PC-3 (cell line): ENCODE measurements at regions of chr21 and their contacts with region 1.

Region 1: GRCh38 chr21:45643021-45643980 is at the start of gene PCBP3:
- DNase-seq: peak; percentile 96
- ATAC-seq: peak; percentile 80
- H3K4me3 ChIP-seq: peak within 1 kb of the TSS; percentile 66
- H3K27ac ChIP-seq: no peak within 1 kb of the TSS
- H3K4me1 ChIP-seq: peaks cover 9% of the 10 kb centered on the region
- H3K27me3 ChIP-seq: no peaks in the 10 kb centered on the region
- CTCF ChIP-seq: no peak
- total RNA-seq, gene PCBP3: 2.4 and 3.0 TPM in 2 replicates

Region 2: GRCh38 chr21:45726438-45726837 is 83.1 kb after region 1 on chr21:
- CTCF ChIA-PET with region 1: no interaction called
- POLR2A ChIA-PET with region 1: no interaction called
- intact Hi-C with region 1: no loop called
- DNase-seq: no peak
- ATAC-seq: no peak
- H3K4me3 ChIP-seq: no peak overlapping the region
- H3K27ac ChIP-seq: no peak overlapping the region
- H3K4me1 ChIP-seq: no peaks in the 10 kb centered on the region
- H3K27me3 ChIP-seq: no peaks in the 10 kb centered on the region
- CTCF ChIP-seq: no peak

Region 3: DNA sequence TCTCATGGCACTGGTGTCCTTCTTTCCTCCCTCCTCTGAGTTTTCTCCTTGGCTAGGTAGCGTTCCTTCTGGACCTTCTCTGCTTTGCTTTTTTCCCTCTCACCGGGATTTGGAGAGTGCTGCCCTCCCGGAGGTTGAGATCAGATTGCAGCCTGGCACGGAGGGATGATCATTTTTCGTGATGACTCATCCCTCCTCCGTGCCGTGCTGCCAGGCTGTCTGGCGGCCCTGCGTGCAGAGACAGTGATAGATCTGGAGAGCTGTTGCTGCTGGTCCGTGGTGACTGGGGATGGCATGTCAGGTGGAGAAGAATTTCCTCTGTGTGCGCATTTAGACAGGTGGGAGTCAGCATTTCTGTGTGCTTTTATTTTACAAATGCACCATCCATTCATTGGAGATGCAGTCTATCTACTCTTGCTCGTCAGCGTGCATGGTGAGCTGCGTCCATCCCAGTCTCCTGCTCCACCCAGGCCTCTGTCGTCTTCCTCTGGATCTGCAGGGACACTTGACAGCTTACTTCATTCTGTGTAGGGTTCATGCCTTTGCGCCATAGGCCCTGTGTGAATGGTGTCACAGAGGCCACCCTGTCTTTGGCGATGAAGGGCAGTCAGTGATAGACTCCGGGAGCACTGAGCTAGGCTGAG is 104.6 kb after region 1 on chr21:
- CTCF ChIA-PET with region 1: no interaction called
- POLR2A ChIA-PET with region 1: no interaction called
- intact Hi-C with region 1: loop called (anchors 5 kb)
- DNase-seq: peak; percentile 90
- ATAC-seq: peak; percentile 99
- H3K4me3 ChIP-seq: peak overlapping the region; percentile 45; the same call in 1 of the 2 replicates
- H3K27ac ChIP-seq: peak overlapping the region; percentile 50
- H3K4me1 ChIP-seq: peaks cover 14% of the 10 kb centered on the region
- H3K27me3 ChIP-seq: no peaks in the 10 kb centered on the region
- CTCF ChIP-seq: 0 out of 2 replicates have a peak, but pooled peaks have one; percentile 9